ENCODE measurements at regions of chr17 and their contacts with region 1.

Region 1: GRCh38 chr17:56891784-56892183 is 22.1 kb downstream of the TRIM25 start:
- DNase-seq: peak in 1 of 2 experiments; percentile 30
- ATAC-seq: peak in 1 of 2 experiments; percentile 57; a peak in 3 of 6 replicates
- H3K4me3 ChIP-seq: no peak overlapping the region
- H3K27ac ChIP-seq: no peak overlapping the region
- H3K4me1 ChIP-seq: peaks cover 6% of the 10 kb centered on the region
- CTCF ChIP-seq: 0 out of 3 replicates have a peak, but pooled peaks have one; percentile 22
- EP300 ChIP-seq: no peak
- POLR2A ChIP-seq: no peak
- RAD21 ChIP-seq: no peak

Region 2: DNA sequence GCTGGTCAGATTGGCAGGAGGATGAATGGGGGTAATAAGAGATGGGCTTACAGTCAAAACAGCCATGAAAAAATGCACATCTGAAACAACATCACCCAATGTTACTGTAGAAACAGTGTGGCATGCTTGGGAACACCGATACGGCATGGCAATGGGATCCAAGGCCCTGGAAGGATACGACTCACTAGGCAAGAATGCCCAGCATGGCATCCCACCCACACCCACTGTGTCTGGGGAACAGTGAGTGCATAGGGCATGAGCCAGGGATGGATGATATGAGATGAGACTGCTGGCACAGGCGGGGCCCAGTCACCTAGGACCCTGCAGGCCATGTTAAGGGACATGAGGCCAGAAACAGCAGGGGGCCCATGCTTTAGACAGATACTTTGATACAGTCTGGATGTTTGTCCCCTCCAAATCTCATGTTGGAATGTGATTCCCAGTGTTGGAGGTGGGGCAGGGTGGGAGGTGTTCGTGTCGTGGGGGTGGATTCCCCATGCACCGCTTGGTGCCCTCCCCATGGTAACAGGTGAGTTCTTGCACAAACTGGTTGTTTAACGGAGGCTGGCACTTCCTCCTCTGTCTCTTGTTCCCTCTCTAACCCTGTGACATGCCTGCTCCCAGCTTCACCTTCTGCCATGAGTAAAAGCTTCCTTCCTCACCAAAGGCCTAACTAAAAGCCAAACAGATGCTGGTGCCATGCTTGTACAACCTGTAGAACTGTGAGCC is 10.7 kb after region 1 on chr17:
- CTCF ChIA-PET with region 1: interaction called, 12 read pairs
- POLR2A ChIA-PET with region 1: no interaction called
- DNase-seq: peak; percentile 68 to 69
- ATAC-seq: peak; percentile 75 to 88
- H3K4me3 ChIP-seq: no peak overlapping the region
- H3K27ac ChIP-seq: peak overlapping the region; percentile 41 to 43; a peak in 4 of 6 replicates
- H3K4me1 ChIP-seq: peaks cover 21% of the 10 kb centered on the region
- CTCF ChIP-seq: no peak
- EP300 ChIP-seq: no peak
- POLR2A ChIP-seq: no peak
- RAD21 ChIP-seq: no peak

Region 3: DNA sequence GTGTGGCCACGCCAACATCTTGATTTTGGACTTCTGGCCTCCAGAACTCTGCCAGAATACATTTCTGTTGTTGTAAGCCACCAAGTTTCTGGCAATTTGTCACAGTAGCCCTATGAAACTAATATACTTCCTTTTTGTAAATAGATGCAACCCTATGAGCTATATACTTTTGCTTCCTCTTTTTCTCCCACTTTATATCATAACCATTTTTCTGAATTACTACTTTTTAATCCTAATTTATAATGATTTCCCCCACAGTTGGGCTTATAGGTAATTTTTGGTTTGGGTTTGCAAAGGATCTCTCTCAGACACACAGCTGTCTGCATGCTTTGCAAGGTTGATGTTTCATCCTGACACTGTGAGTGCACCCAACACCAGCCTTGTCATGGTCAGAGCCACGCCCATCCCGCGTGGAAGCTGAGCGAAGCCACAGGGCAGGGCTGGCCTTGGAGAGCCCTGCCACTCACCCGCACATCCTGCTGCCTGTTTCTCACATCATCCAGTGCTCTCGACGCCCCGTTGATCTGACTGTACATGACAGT is 16.3 kb after region 1 on chr17:
- CTCF ChIA-PET with region 1: interaction called, 12 read pairs
- POLR2A ChIA-PET with region 1: no interaction called
- DNase-seq: peak in 1 of 2 experiments; percentile 53
- ATAC-seq: peak; percentile 33 to 39; a peak in 3 of 6 replicates
- H3K4me3 ChIP-seq: no peak overlapping the region
- H3K27ac ChIP-seq: no peak overlapping the region
- H3K4me1 ChIP-seq: peaks cover 29% of the 10 kb centered on the region; the same call in 2 of the 3 replicates
- CTCF ChIP-seq: no peak
- EP300 ChIP-seq: no peak
- POLR2A ChIP-seq: no peak
- RAD21 ChIP-seq: no peak

Region 4: GRCh38 chr17:56913864-56914640 is 22.3 kb after region 1 on chr17 and contains the start of gene TRIM25:
- CTCF ChIA-PET with region 1: interaction called, 10 read pairs
- POLR2A ChIA-PET with region 1: interaction called, 16 read pairs
- DNase-seq: peak; percentile 93 to 98
- ATAC-seq: peak; percentile 78 to 91
- H3K4me3 ChIP-seq: peak within 1 kb of the TSS; percentile 63
- H3K27ac ChIP-seq: peak within 1 kb of the TSS; percentile 93 to 94
- H3K4me1 ChIP-seq: peaks cover 42% of the 10 kb centered on the region
- CTCF ChIP-seq: no peak
- EP300 ChIP-seq: no peak
- POLR2A ChIP-seq: peak; percentile 98
- RAD21 ChIP-seq: 0 out of 5 replicates have a peak, but pooled peaks of 1 of the 2 experiments have one; percentile 22
- polyA plus RNA-seq, gene TRIM25: 56.6 and 65.4 TPM in 2 replicates